Activated CD4-positive, alpha-beta memory T cell treated with anti-CD3 and anti-CD28 coated beads for 36 hours (primary cell): ENCODE measurements at regions of chr16 and their contacts with region 1.

Region 1: DNA sequence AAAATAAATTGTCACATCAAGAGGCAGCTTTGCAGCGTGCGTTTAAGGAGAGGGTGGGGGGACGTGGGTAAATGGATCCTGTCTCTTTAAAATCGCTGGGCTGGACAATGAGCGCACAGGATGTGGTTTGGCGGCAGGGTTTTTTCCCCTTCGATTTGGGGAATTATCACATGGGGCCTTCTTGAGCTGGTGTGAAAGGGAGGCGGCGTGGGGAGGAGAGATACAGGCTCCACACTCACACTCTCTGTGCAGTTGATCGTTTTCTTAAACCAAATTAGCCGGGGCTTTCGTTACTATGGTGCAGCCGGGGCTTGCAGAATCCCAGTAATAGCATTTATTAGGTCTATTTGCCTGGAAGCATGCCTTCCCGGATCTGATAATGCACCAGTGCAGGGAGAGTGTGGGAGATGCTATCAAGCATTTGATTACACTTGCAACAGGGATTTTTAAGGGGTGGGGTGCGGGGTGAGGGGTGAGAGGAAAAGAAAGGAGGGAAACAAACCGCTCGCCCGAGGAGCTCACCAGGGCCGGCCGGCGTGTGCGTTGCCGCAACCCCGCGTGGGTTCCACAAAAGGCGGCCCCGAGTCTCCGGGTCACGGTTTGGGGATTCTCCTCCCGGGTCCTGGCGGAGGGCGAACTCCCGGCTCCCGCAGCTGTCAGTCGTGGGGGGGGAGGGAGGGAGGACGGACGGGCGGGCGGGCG is 58.9 kb upstream of the GSE1 start:
- DNase-seq: peak; percentile 92
- H3K4me3 Mint-ChIP-seq: peak overlapping the region; percentile 82
- H3K27ac Mint-ChIP-seq: peak overlapping the region; percentile 91
- H3K4me1 Mint-ChIP-seq: peaks cover 35% of the 10 kb centered on the region
- H3K27me3 Mint-ChIP-seq: no peaks in the 10 kb centered on the region

Region 2: GRCh38 chr16:85202631-85203461 is 351.4 kb before region 1 on chr16:
- CTCF ChIA-PET with region 1: no interaction called
- POLR2A ChIA-PET with region 1: no interaction called
- intact Hi-C with region 1: no loop called
- DNase-seq: no peak
- H3K4me3 Mint-ChIP-seq: no peak overlapping the region
- H3K27ac Mint-ChIP-seq: no peak overlapping the region
- H3K4me1 Mint-ChIP-seq: no peaks in the 10 kb centered on the region
- H3K27me3 Mint-ChIP-seq: peaks cover 3% of the 10 kb centered on the region

Region 3: GRCh38 chr16:85420501-85421337 is 133.5 kb before region 1 on chr16:
- CTCF ChIA-PET with region 1: interaction called, 3 read pairs
- POLR2A ChIA-PET with region 1: no interaction called
- intact Hi-C with region 1: loop called (anchors 5 kb)
- DNase-seq: peak; percentile 78
- H3K4me3 Mint-ChIP-seq: no peak overlapping the region
- H3K27ac Mint-ChIP-seq: no peak overlapping the region
- H3K4me1 Mint-ChIP-seq: peaks cover 2% of the 10 kb centered on the region
- H3K27me3 Mint-ChIP-seq: peaks cover 4% of the 10 kb centered on the region

Region 4: DNA sequence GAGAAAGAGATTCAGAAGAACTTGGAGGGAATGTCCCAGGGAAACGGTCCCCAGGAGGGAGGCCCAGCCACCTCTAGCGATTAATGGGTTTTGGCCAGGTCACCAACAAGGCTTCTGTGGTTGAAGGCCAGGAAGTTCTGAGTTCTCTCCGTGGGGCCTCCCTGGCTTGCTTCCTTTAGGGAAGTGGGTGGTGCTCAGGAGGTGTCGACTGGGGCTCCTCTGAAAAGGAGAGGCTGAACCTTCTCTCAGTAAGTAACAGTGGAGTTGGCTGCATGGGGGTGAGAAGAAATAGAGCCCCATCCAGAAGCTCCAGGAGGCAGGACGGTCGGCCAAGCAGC is 18.2 kb before region 1 on chr16:
- CTCF ChIA-PET with region 1: no interaction called
- POLR2A ChIA-PET with region 1: no interaction called
- intact Hi-C with region 1: no loop called
- DNase-seq: no peak
- H3K4me3 Mint-ChIP-seq: no peak overlapping the region
- H3K27ac Mint-ChIP-seq: no peak overlapping the region
- H3K4me1 Mint-ChIP-seq: no peaks in the 10 kb centered on the region
- H3K27me3 Mint-ChIP-seq: no peaks in the 10 kb centered on the region

Region 5: GRCh38 chr16:85564277-85565051 is 10.2 kb after region 1 on chr16:
- CTCF ChIA-PET with region 1: interaction called, 30 read pairs
- POLR2A ChIA-PET with region 1: interaction called, 20 read pairs
- intact Hi-C with region 1: no loop called
- DNase-seq: peak; percentile 82
- H3K4me3 Mint-ChIP-seq: no peak overlapping the region
- H3K27ac Mint-ChIP-seq: no peak overlapping the region
- H3K4me1 Mint-ChIP-seq: peaks cover 45% of the 10 kb centered on the region
- H3K27me3 Mint-ChIP-seq: no peaks in the 10 kb centered on the region

Region 6: GRCh38 chr16:85569615-85570212 is 15.5 kb after region 1 on chr16:
- CTCF ChIA-PET with region 1: interaction called, 30 read pairs
- POLR2A ChIA-PET with region 1: interaction called, 13 read pairs
- intact Hi-C with region 1: loop called (anchors 1 kb)
- DNase-seq: peak; percentile 67
- H3K4me3 Mint-ChIP-seq: peak overlapping the region; percentile 45
- H3K27ac Mint-ChIP-seq: peak overlapping the region; percentile 79
- H3K4me1 Mint-ChIP-seq: peaks cover 61% of the 10 kb centered on the region
- H3K27me3 Mint-ChIP-seq: no peaks in the 10 kb centered on the region

Region 7: DNA sequence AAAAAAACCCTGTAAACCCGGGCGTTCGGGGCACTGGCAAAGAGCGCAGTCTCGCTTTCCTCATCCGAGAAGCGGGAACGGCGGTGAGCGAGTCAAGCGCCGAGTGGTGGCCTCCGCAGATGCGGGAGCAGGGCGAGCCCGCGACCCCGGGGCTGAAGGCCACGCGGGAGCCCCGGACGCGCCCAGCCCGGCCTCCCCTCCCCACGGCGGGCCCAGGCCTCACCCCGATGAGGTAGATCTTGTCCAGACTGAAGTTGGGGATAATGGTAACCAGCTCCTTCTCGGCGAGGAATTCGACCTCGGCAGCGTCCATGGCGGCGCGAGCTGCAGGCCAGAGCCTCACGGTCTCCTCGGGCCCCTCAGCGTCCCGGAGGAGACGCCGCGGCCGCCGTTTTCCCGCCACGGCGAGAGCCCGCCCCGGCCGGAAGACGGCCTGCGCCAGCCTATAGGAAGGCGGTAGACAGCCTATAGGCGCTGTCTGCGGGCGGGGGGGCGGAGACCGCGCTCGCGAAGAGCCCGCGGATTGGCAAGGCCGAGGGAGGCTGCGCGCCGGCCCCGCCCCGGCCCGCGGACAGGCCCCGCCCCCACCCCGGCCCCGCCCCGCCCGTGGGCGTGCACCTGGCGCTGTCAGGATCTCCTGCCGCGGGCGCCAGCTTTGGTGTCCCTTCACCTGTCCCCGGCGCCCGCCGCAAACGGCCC is 134.5 kb after region 1 on chr16 and contains the start of gene GINS2:
- CTCF ChIA-PET with region 1: no interaction called
- POLR2A ChIA-PET with region 1: no interaction called
- intact Hi-C with region 1: loop called (anchors 5 kb)
- DNase-seq: peak; percentile 95
- H3K4me3 Mint-ChIP-seq: peak within 1 kb of the TSS; percentile 88
- H3K27ac Mint-ChIP-seq: peak within 1 kb of the TSS; percentile 67
- H3K4me1 Mint-ChIP-seq: peaks cover 15% of the 10 kb centered on the region
- H3K27me3 Mint-ChIP-seq: no peaks in the 10 kb centered on the region
- total RNA-seq, gene GINS2: 66.9 to 67.8 TPM